ENCODE measurements at regions of chr9 and their contacts with region 1.

Region 1: GRCh38 chr9:96327694-96328352 is 25.8 kb upstream of the HSD17B3 start:
- DNase-seq: peak; percentile 29 to 38
- H3K4me3 ChIP-seq: no peak overlapping the region
- H3K27ac ChIP-seq: no peak overlapping the region
- H3K4me1 ChIP-seq: peaks cover 16% of the 10 kb centered on the region
- H3K27me3 ChIP-seq: no peaks in the 10 kb centered on the region
- CTCF ChIP-seq: peak; percentile 90

Region 2: DNA sequence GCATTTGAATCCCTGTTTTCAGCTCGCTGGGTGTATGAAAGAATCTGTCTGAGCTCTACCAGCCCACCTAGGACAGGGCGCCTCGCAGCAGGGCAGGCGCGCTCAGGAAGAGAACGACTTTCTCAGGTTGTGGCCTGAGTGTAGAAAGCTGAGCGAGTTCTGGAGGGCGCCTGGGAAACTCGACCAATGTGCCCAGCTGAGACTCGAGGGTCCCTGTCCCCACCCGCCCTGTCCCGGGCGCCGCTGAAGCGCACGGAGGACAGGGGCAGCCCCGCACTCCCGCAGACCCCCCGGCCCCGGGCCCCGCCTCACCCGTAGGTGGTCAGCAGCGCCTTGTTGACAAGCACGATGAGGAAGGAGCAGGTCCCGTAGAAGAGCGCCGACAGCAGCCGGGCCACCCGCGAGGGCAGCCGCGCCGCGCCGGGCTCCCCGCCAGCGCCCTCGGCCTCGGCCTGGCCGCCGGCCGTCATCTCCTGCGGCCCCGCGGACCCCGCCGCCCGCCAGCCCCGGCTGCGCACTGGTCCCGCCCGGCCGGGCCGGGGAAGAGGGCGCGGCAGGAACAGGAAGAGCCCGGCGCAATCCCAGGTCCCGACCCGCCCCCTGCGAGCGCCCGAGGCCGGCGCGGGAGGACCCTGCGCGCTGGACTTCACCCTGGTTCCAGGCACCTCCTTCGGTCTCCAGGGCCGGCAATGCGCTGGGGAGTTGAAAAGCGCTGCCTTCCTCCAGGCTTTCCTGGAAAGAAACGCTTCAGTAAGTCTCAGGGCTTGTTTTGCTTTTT is 55.5 kb after region 1 on chr9 and contains the start of gene SLC35D2:
- CTCF ChIA-PET with region 1: interaction called, 3 read pairs
- POLR2A ChIA-PET with region 1: no interaction called
- intact Hi-C with region 1: loop called (anchors 2 kb)
- DNase-seq: peak; percentile 54 to 78
- H3K4me3 ChIP-seq: peak within 1 kb of the TSS; percentile 58
- H3K27ac ChIP-seq: peak within 1 kb of the TSS; percentile 36
- H3K4me1 ChIP-seq: peaks cover 19% of the 10 kb centered on the region
- H3K27me3 ChIP-seq: no peaks in the 10 kb centered on the region
- CTCF ChIP-seq: no peak
- total RNA-seq, gene SLC35D2: 27.6 and 34.4 TPM in 2 replicates

Region 3: DNA sequence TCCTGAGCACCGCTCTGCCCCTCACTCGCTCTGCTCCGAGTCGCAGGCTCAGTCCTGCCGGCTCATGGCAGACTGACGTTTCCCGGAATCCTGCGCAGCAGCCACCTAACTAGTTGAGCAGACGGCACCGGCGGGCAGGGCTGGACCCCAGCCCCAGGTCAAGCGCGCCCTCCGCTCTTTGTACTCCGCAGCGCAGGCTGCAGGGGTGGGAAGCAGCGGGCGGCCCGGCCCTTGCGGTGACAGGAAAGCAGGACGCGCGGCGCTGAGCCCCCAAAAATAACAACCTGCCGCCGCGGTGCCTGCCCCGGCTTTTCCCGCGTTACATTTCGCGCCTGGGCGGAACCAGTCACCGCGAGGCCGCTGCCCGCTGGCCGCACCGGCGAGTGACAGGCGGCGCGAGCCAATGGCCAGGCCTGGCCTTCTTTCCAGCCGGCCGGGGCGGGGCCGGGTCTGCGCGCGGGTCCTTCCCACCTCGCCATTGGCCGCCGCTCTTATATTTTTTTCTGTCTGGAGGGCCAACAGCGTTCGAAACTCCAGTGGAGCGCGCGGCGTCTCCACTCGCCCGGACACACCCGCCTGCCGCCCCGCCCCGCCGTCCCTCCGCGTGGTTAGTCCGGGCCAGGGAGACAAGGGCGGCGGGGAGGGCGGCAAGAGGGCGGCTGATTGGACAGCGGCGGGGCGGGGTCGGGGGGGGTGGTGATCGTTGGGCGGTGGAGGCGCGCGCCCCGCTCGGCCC is 90.4 kb after region 1 on chr9 and contains the start of gene ZNF367:
- CTCF ChIA-PET with region 1: no interaction called
- POLR2A ChIA-PET with region 1: no interaction called
- intact Hi-C with region 1: loop called (anchors 1 kb)
- DNase-seq: peak; percentile 90 to 99
- H3K4me3 ChIP-seq: peak within 1 kb of the TSS; percentile 97
- H3K27ac ChIP-seq: peak within 1 kb of the TSS; percentile 93
- H3K4me1 ChIP-seq: peaks cover 33% of the 10 kb centered on the region
- H3K27me3 ChIP-seq: no peaks in the 10 kb centered on the region
- CTCF ChIP-seq: no peak
- total RNA-seq, gene ZNF367: 12.6 and 14.0 TPM in 2 replicates

Region 4: GRCh38 chr9:96654443-96655197 is 326.8 kb after region 1 on chr9:
- CTCF ChIA-PET with region 1: no interaction called
- POLR2A ChIA-PET with region 1: no interaction called
- intact Hi-C with region 1: loop called (anchors 5 kb)
- DNase-seq: peak; percentile 50 to 73
- H3K4me3 ChIP-seq: peak overlapping the region; percentile 84
- H3K27ac ChIP-seq: peak overlapping the region; percentile 66
- H3K4me1 ChIP-seq: peaks cover 17% of the 10 kb centered on the region
- H3K27me3 ChIP-seq: no peaks in the 10 kb centered on the region
- CTCF ChIP-seq: no peak

Region 5: DNA sequence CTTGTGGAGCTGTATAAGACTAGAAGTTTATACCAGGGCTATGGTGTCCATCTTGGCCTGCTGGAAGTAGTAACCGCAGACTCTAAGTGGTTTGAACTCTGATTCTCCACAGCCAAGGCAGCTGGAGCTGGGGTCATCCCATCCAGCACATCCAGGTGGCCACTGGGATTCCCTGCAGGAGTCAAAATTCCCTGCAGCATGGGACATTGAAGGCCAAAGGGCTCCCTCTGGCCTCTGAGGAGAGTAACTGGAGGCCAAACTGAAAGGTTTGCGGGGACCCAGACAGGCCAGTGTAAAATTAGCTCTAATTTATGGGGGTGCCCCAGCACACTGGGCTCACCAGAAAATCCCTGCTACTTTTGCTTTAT is 339.5 kb after region 1 on chr9:
- CTCF ChIA-PET with region 1: interaction called, 12 read pairs
- POLR2A ChIA-PET with region 1: no interaction called
- intact Hi-C with region 1: loop called (anchors 2 kb)
- DNase-seq: no peak
- H3K4me3 ChIP-seq: no peak overlapping the region
- H3K27ac ChIP-seq: no peak overlapping the region
- H3K4me1 ChIP-seq: no peaks in the 10 kb centered on the region
- H3K27me3 ChIP-seq: no peaks in the 10 kb centered on the region
- CTCF ChIP-seq: no peak

Measured in PC-9 (cell line).